ENCODE measurements at regions of chr17 and their contacts with region 1.

Region 1: GRCh38 chr17:22654447-22654846 is 962.1 kb downstream of the KCNJ18 start:
- DNase-seq: no peak
- ATAC-seq: no peak
- H3K4me3 Mint-ChIP-seq: no peak overlapping the region
- H3K27ac Mint-ChIP-seq: no peak overlapping the region
- H3K4me1 Mint-ChIP-seq: no peaks in the 10 kb centered on the region
- H3K27me3 Mint-ChIP-seq: no peaks in the 10 kb centered on the region
- CTCF ChIP-seq: no peak

Region 2: DNA sequence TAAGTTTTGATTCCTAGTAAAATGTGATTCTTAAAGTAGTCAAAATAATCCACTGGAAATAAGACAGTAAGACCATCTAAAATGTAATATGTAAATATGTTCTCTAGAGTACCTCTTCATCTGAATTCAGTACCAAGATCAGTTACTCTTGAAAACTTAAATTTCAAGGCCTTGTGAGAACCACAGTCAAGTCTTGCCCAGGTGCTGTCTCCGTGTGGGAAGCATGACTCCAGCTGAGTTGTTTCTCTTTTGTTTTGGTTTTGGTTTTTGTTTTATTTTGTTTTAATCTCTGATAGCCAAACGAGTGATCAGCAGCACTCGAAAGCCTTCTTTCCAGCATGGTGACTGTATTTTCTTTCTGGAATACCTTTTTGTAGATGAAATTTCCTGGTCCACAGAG is 55.1 kb before region 1 on chr17:
- CTCF ChIA-PET with region 1: no interaction called
- POLR2A ChIA-PET with region 1: no interaction called
- intact Hi-C with region 1: loop called (anchors 10 kb)
- DNase-seq: no peak
- ATAC-seq: no peak
- H3K4me3 Mint-ChIP-seq: no peak overlapping the region
- H3K27ac Mint-ChIP-seq: no peak overlapping the region
- H3K4me1 Mint-ChIP-seq: no peaks in the 10 kb centered on the region
- H3K27me3 Mint-ChIP-seq: no peaks in the 10 kb centered on the region
- CTCF ChIP-seq: no peak

Region 3: GRCh38 chr17:22671110-22671509 is 16.7 kb after region 1 on chr17:
- CTCF ChIA-PET with region 1: no interaction called
- POLR2A ChIA-PET with region 1: no interaction called
- intact Hi-C with region 1: no loop called
- DNase-seq: no peak
- ATAC-seq: no peak
- H3K4me3 Mint-ChIP-seq: no peak overlapping the region
- H3K27ac Mint-ChIP-seq: no peak overlapping the region
- H3K4me1 Mint-ChIP-seq: no peaks in the 10 kb centered on the region
- H3K27me3 Mint-ChIP-seq: no peaks in the 10 kb centered on the region
- CTCF ChIP-seq: no peak

Region 4: GRCh38 chr17:22707626-22708025 is 53.2 kb after region 1 on chr17:
- CTCF ChIA-PET with region 1: no interaction called
- POLR2A ChIA-PET with region 1: no interaction called
- intact Hi-C with region 1: no loop called
- DNase-seq: no peak
- ATAC-seq: no peak
- H3K4me3 Mint-ChIP-seq: no peak overlapping the region
- H3K27ac Mint-ChIP-seq: no peak overlapping the region
- H3K4me1 Mint-ChIP-seq: no peaks in the 10 kb centered on the region
- H3K27me3 Mint-ChIP-seq: no peaks in the 10 kb centered on the region
- CTCF ChIP-seq: no peak

Measured in activated B cell treated with CpG ODN at 0.5 μM for 24 hours (primary cell).